Upper lobe of right lung (tissue), 1 donor: ENCODE measurements at regions of chr16 and their contacts with region 1.

Region 1: GRCh38 chr16:57863434-57864160 is 61.3 kb upstream of the KIFC3 start:
- DNase-seq: peak; percentile 71
- ATAC-seq: peak; percentile 95
- H3K4me3 ChIP-seq: no peak overlapping the region
- H3K27ac ChIP-seq: no peak overlapping the region
- H3K4me1 ChIP-seq: no peaks in the 10 kb centered on the region
- H3K27me3 ChIP-seq: no peaks in the 10 kb centered on the region
- CTCF ChIP-seq: peak; percentile 60

Region 2: DNA sequence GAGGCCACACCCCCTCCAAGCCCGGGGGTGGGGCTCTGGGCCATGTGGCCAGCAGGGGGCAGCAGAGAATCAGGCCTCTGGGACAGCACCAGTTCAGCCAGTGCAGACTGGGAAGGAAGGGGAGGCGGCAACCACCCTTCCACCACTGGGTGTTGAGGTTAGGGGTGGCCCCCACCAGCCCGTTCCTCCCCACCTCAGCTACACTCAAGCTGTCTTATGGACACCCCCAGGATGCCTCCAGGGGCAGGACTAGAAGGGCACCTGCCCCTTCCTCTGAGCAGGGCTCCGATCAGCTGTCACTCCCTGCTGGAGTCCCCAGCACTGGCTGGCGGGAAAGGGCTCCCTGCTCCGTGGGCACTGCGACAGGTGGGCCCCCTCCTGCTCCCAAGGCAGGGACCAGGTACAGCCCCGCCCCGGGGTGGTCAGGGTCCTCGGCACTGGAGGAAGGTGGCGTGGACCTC is 106.2 kb before region 1 on chr16:
- intact Hi-C with region 1: loop called (anchors 5 kb)
- DNase-seq: peak; percentile 93
- ATAC-seq: peak; percentile 91
- H3K4me3 ChIP-seq: no peak overlapping the region
- H3K27ac ChIP-seq: peak overlapping the region; percentile 30
- H3K4me1 ChIP-seq: peaks cover 8% of the 10 kb centered on the region
- H3K27me3 ChIP-seq: no peaks in the 10 kb centered on the region
- CTCF ChIP-seq: peak; percentile 99

Region 3: GRCh38 chr16:57984331-57985203 is 121.0 kb after region 1 on chr16:
- intact Hi-C with region 1: no loop called
- DNase-seq: peak; percentile 95
- ATAC-seq: peak; percentile 97
- H3K4me3 ChIP-seq: peak overlapping the region; percentile 57
- H3K27ac ChIP-seq: no peak overlapping the region
- H3K4me1 ChIP-seq: no peaks in the 10 kb centered on the region
- H3K27me3 ChIP-seq: no peaks in the 10 kb centered on the region
- CTCF ChIP-seq: no peak

Region 4: GRCh38 chr16:58025351-58026138 is 161.9 kb after region 1 on chr16 and contains the start of gene MMP15:
- intact Hi-C with region 1: no loop called
- DNase-seq: peak; percentile 96
- ATAC-seq: peak; percentile 82
- H3K4me3 ChIP-seq: peak within 1 kb of the TSS; percentile 77
- H3K27ac ChIP-seq: peak within 1 kb of the TSS; percentile 78
- H3K4me1 ChIP-seq: peaks cover 56% of the 10 kb centered on the region
- H3K27me3 ChIP-seq: no peaks in the 10 kb centered on the region
- CTCF ChIP-seq: no peak
- total RNA-seq, gene MMP15: 25.2 TPM